ENCODE measurements at regions of chr2 and their contacts with region 1.

Region 1: GRCh38 chr2:20273045-20273444 is 48.1 kb upstream of the SDC1 start:
- DNase-seq: no peak
- H3K4me3 ChIP-seq: no peak overlapping the region
- H3K4me3 Mint-ChIP-seq: no peak overlapping the region
- H3K27ac ChIP-seq: no peak overlapping the region
- H3K27ac Mint-ChIP-seq: no peak overlapping the region
- H3K4me1 ChIP-seq: no peaks in the 10 kb centered on the region
- H3K4me1 Mint-ChIP-seq: peaks cover 11 to 18% (median 14%) of the 10 kb centered on the region in 4 donors
- H3K27me3 ChIP-seq: no peaks in the 10 kb centered on the region
- H3K27me3 Mint-ChIP-seq: no peaks in the 10 kb centered on the region

Region 2: GRCh38 chr2:20304411-20304810 is 31.4 kb after region 1 on chr2:
- CTCF ChIA-PET with region 1: no interaction called
- POLR2A ChIA-PET with region 1: no interaction called
- intact Hi-C with region 1: loop called (anchors 5 kb)
- DNase-seq: no peak
- H3K4me3 ChIP-seq: no peak overlapping the region
- H3K4me3 Mint-ChIP-seq: no peak overlapping the region
- H3K27ac ChIP-seq: no peak overlapping the region
- H3K27ac Mint-ChIP-seq: no peak overlapping the region
- H3K4me1 ChIP-seq: no peaks in the 10 kb centered on the region
- H3K4me1 Mint-ChIP-seq: peaks cover 9 to 19% (median 14%) of the 10 kb centered on the region in 4 donors
- H3K27me3 ChIP-seq: no peaks in the 10 kb centered on the region
- H3K27me3 Mint-ChIP-seq: no peaks in the 10 kb centered on the region